Right lobe of liver (tissue), 6 donors: ENCODE measurements at regions of chr1 and their contacts with region 1.

Region 1: GRCh38 chr1:94335950-94336349 is 82.2 kb upstream of the ABCD3 start:
- DNase-seq: peak; percentile 46 to 76 (median 58)
- ATAC-seq: peak; percentile 98 to 99 (median 98)
- H3K4me3 ChIP-seq: no peak overlapping the region
- H3K27ac ChIP-seq: no peak overlapping the region
- H3K4me1 ChIP-seq: no peaks in the 10 kb centered on the region
- H3K27me3 ChIP-seq: no peaks in the 10 kb centered on the region
- CTCF ChIP-seq: peak; percentile 80 to 98 (median 92)
- POLR2A ChIP-seq: no peak

Region 2: GRCh38 chr1:94045465-94046056 is 290.4 kb before region 1 on chr1:
- intact Hi-C with region 1: loop called (anchors 5 kb)
- DNase-seq: peak; percentile 61 to 75 (median 65)
- ATAC-seq: peak; percentile 81 to 90 (median 84)
- H3K4me3 ChIP-seq: peak overlapping the region in 1 of 3 donors; percentile 43
- H3K27ac ChIP-seq: peak overlapping the region; percentile 10 to 51 (median 39)
- H3K4me1 ChIP-seq: peaks cover 0 to 4% (median 0%) of the 10 kb centered on the region in 4 donors
- H3K27me3 ChIP-seq: no peaks in the 10 kb centered on the region
- CTCF ChIP-seq: peak; percentile 65 to 76 (median 66)
- POLR2A ChIP-seq: no peak

Region 3: DNA sequence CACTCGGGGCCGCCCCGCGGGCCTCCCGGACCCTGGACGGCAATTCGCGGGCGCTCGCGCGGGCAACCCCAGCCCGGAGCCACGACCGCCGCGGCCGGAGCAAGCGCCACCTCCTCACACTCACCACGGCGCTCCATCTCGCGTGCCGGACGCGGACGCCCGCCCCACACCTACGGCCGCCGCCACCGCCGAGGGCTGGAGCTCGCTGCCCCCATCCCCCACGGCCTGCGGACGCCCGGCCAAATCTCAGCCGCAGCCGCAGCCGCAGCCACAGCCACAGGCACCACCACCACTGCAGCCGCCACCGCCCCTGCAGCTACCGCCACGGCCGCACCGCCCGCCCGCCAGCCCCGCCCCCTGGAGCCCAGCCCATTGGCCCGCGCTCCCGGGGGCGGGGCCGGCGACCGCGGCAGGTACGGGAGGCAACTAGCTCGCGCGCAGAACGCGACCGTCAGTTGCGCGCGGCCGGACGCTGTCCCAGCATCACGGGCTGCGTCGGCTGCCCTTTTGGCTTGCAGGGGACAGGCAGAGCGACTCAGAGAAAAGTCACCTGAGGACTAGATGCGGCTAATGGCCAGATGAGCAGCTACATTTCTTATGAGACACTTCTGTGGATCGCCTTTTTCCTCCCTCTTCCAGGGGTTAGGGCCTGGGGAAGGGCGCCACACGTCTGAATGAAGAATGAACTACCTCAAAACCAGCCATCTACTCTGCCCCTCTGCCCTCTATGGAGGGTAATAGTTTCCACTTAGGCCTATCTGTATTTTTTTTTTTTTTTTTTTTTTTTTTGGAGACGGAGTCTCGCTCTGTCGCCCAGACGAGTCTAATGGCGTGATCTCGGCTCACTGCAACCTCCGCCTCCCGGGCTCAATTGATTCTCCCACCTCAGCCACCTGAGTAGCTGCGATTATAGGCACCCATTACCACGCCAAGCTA is 98.4 kb before region 1 on chr1 and contains the start of gene ARHGAP29:
- intact Hi-C with region 1: no loop called
- DNase-seq: peak; percentile 93
- ATAC-seq: peak; percentile 89 to 94 (median 92)
- H3K4me3 ChIP-seq: peak within 1 kb of the TSS; percentile 77 to 91 (median 82)
- H3K27ac ChIP-seq: peak within 1 kb of the TSS; percentile 96 to 97 (median 97)
- H3K4me1 ChIP-seq: peaks cover 0 to 11% (median 0%) of the 10 kb centered on the region in 4 donors
- H3K27me3 ChIP-seq: no peaks in the 10 kb centered on the region
- CTCF ChIP-seq: peak in 1 of 4 donors; percentile 1
- POLR2A ChIP-seq: peak; percentile 99
- total RNA-seq, gene ARHGAP29: 15.1 to 28.9 (median 21.1) TPM